Activated T-helper 2 cell treated with anti-CD3 and anti-CD28 coated beads, Interferon-gamma antibody, Interleukin-2, Interleukin-4, amounts not matched to agents 10 μg/mL and 5 μg/mL and 100 μg/mL, durations not matched to agents 14 hours and 24 hours and 36 hours (primary cell): ENCODE measurements at regions of chrX and their contacts with region 1.

Region 1: GRCh38 chrX:24479924-24480323 is 14.8 kb downstream of the PDK3 start:
- DNase-seq: peak; percentile 73
- H3K4me3 Mint-ChIP-seq: peak overlapping the region; percentile 70
- H3K27ac Mint-ChIP-seq: peak overlapping the region; percentile 92
- H3K4me1 Mint-ChIP-seq: peaks cover 45% of the 10 kb centered on the region
- H3K27me3 Mint-ChIP-seq: no peaks in the 10 kb centered on the region

Region 2: GRCh38 chrX:24380262-24381187 is 99.4 kb before region 1 on chrX:
- intact Hi-C with region 1: no loop called
- DNase-seq: no peak
- H3K4me3 Mint-ChIP-seq: no peak overlapping the region
- H3K27ac Mint-ChIP-seq: no peak overlapping the region
- H3K4me1 Mint-ChIP-seq: no peaks in the 10 kb centered on the region
- H3K27me3 Mint-ChIP-seq: peaks cover 31% of the 10 kb centered on the region

Region 3: DNA sequence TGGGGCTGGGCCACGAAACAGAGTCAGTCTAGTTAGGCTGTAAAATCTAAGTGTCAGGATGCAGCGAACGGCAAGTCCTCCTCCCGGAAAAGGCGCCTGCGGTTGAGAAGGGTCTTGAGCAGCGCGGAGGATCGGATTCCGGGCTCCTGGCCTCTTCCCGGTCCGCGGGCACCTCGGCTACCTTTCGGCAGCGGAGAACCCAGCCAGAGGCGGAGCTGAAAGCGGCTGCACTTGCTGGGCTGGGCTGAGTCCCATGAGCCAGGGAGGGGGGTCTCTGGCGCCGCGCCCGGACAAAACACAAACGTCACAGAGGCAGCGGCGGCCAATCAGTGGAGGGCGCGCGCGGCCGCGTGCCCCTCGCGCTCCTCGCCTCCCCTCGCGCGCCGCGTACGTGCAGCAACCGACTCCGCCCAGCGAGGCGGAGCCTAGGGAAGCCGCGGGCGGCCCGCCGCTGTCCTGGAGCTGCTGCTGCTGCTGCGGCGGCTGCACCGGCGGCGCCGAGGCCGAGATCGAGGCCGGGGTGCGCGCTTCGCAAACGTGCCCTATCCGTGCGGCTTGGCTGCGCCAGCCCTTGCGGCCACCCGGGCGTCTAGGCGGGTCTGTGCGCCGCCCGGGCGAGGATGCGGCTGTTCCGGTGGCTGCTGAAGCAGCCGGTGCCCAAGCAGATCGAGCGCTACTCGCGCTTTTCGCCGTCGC is 14.9 kb before region 1 on chrX and contains the start of gene PDK3:
- intact Hi-C with region 1: loop called (anchors 1 kb)
- DNase-seq: peak; percentile 81
- H3K4me3 Mint-ChIP-seq: peak within 1 kb of the TSS; percentile 84
- H3K27ac Mint-ChIP-seq: peak within 1 kb of the TSS; percentile 85
- H3K4me1 Mint-ChIP-seq: peaks cover 27% of the 10 kb centered on the region
- H3K27me3 Mint-ChIP-seq: no peaks in the 10 kb centered on the region
- total RNA-seq, gene PDK3: 24.6 and 26.4 TPM in 2 replicates

Region 4: GRCh38 chrX:24498975-24499374 is 19.1 kb after region 1 on chrX:
- intact Hi-C with region 1: loop called (anchors 2 kb)
- DNase-seq: no peak
- H3K4me3 Mint-ChIP-seq: no peak overlapping the region
- H3K27ac Mint-ChIP-seq: no peak overlapping the region
- H3K4me1 Mint-ChIP-seq: peaks cover 15% of the 10 kb centered on the region
- H3K27me3 Mint-ChIP-seq: no peaks in the 10 kb centered on the region

Region 5: GRCh38 chrX:24506055-24506454 is 26.1 kb after region 1 on chrX:
- intact Hi-C with region 1: loop called (anchors 1 kb)
- DNase-seq: peak; percentile 9
- H3K4me3 Mint-ChIP-seq: peak overlapping the region; percentile 17
- H3K27ac Mint-ChIP-seq: peak overlapping the region; percentile 87
- H3K4me1 Mint-ChIP-seq: peaks cover 22% of the 10 kb centered on the region
- H3K27me3 Mint-ChIP-seq: no peaks in the 10 kb centered on the region